PC-3 (cell line): ENCODE measurements at regions of chr10 and their contacts with region 1.

Region 1: GRCh38 chr10:66698069-66698468 is 227.8 kb upstream of the LRRTM3 start:
- DNase-seq: no peak
- ATAC-seq: no peak
- H3K4me3 ChIP-seq: no peak overlapping the region
- H3K27ac ChIP-seq: no peak overlapping the region
- H3K4me1 ChIP-seq: no peaks in the 10 kb centered on the region
- H3K27me3 ChIP-seq: no peaks in the 10 kb centered on the region
- CTCF ChIP-seq: no peak

Region 2: GRCh38 chr10:66752714-66753113 is 54.6 kb after region 1 on chr10:
- CTCF ChIA-PET with region 1: no interaction called
- POLR2A ChIA-PET with region 1: no interaction called
- intact Hi-C with region 1: loop called (anchors 5 kb)
- DNase-seq: peak; percentile 74
- ATAC-seq: peak; percentile 30
- H3K4me3 ChIP-seq: no peak overlapping the region
- H3K27ac ChIP-seq: no peak overlapping the region
- H3K4me1 ChIP-seq: peaks cover 24% of the 10 kb centered on the region
- H3K27me3 ChIP-seq: no peaks in the 10 kb centered on the region
- CTCF ChIP-seq: no peak